ENCODE measurements at regions of chr11 and their contacts with region 1.

Region 1: DNA sequence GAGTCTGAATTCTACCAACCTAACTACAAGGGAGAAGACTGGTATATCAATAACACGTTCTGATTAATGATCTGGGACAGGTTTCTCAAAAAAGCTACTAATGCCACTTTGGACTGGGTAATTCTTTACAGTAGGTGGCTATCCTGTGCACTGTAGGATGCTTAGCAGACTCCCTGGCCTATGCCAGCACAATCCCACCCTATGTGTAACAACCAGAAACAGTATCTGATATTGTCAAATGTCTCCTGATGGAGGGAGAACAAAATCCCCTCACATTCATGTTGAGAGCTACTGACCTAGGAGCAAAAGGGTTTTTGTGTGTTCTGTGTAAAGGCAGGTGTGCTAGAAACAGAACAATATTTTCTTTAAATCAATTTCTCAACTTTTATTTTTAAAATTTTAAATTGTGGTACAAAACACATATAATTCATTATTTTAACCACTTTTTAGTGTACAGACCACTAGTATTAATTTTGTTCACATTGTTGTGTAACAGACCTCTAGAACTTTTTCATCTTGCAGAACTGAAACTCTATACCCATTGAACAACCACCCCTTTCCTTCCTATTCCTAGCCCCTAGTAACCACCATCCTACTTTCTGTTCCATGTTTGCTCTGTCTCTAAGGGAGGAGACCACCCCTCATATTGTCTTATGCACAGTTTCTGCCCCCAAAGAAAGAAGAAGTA is 2.1 kb upstream of the MS4A6A start:
- DNase-seq: no peak
- ATAC-seq: peak; percentile 73

Region 2: DNA sequence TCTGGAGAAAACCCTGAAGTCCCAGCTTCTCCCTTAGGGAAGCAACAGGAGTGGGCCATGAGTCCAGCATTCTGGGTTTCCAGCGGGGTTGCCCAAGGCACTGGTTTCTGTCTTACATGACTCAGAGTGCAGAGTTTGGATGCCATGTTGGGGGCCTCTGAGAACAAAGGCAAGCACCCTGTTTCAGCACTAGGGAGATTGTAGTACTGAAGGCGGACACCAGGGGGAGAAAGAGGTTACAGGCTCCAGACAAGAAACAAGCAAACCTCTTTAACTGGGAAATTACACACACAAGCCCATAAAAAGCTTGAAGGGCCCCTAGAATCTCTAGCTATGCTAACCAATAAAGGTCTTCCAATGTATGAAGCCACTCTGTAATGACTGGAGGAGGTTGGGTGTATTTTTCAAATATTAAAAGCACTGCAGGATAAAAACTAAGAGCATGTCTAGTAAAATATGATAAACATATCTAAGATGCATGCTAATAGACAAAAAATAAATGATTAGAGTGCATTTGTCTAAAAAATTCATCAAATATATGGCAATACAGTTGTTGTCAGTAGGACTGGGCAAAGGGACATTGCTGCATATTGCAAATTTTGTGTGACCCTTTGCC is 149.1 kb after region 1 on chr11:
- intact Hi-C with region 1: loop called (anchors 5 kb)
- DNase-seq: no peak
- ATAC-seq: peak; percentile 27

Region 3: DNA sequence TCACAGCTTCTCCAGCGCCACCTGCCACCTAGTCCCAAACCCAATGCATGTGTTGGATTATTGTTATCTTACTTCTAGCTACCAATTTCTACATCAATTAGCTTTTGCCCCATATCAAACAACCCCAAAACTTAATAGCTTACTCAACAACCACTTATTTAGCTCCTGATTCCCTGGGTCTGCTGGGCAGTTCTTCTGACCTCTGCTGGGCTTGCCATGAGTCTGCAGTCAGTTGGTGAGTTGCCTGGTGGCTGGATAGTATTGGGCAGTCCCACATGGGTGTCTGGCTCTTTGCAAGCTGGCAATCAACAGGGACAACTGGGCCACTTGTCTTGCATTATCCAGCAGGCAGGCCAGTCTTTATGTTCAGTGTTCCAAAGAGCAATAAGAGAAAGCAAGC is 558.1 kb after region 1 on chr11:
- intact Hi-C with region 1: no loop called
- DNase-seq: no peak
- ATAC-seq: no peak

Measured in left ventricle myocardium superior (tissue), 1 donor.